ENCODE measurements at regions of chr1 and their contacts with region 1.

Region 1: DNA sequence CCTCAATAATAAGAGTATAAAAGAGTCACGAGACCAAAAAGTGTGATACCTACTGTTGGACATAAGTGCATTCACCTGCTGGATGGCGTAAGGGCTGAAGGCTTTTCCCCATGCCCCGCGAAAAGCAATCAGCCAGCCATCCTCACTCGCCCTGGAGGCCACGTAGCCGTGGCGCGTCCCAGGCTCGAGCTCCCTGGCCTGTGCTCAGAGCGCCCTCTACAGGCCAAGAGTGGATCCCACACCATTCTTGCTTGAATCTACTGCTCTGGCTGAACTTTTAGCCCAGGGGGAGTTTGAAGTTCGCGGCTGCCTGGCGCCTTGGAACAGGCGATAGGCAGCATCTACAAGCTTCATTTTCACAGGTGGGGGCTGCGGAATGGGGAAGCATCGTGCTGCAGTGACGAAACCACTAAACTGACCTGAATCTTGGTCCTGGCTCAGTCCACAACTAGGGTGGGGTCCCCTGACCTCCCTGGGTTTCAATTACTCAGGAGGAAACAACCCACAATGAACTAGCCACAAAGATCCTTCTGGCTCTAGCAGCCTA is 70.3 kb upstream of the SERBP1 start:
- DNase-seq: peak; percentile 90
- H3K4me3 Mint-ChIP-seq: no peak overlapping the region
- H3K27ac Mint-ChIP-seq: no peak overlapping the region
- H3K4me1 Mint-ChIP-seq: peaks cover 4% of the 10 kb centered on the region
- H3K27me3 Mint-ChIP-seq: peaks cover 6% of the 10 kb centered on the region

Region 2: GRCh38 chr1:67230539-67230938 is 269.9 kb before region 1 on chr1:
- CTCF ChIA-PET with region 1: interaction called, 31 read pairs
- POLR2A ChIA-PET with region 1: no interaction called
- DNase-seq: no peak
- H3K4me3 Mint-ChIP-seq: no peak overlapping the region
- H3K27ac Mint-ChIP-seq: no peak overlapping the region
- H3K4me1 Mint-ChIP-seq: peaks cover 9% of the 10 kb centered on the region
- H3K27me3 Mint-ChIP-seq: no peaks in the 10 kb centered on the region

Region 3: DNA sequence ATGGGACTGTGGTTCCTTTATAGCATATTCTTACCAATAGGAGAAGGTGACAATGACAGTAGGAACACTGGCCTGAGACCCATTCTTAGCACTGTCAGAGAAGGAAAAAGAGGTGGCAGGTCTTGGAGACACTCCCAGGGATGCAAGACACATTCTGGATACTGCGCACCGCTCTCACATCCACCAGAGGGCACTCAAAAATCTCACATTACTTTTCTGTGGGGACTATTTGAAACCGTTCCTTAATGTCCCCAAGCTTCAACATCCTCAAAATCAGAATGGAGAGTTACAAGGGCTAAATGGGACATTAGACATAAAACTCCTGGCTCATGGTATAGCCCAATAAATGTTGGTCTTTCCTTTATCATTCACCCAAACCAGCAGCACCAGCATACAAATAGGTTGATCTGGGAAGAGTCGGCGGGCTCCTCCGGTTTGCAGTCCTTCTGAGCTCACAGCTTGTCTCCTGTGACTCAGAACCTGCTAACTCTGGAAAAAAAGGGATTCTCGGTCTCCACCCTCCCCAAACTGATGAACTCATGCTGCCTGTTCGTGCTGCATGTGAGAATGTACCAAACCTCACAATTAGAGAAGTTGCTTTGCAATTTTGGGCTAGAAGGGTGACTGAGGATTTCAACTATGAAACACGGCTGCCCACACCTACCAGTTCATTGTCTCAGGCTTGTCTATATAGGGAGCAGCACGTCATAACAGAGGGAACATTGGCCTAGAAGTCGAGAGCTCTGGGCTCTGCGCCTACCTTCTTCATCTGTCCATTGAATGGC is 152.6 kb before region 1 on chr1:
- CTCF ChIA-PET with region 1: interaction called, 28 read pairs
- POLR2A ChIA-PET with region 1: no interaction called
- DNase-seq: no peak
- H3K4me3 Mint-ChIP-seq: no peak overlapping the region
- H3K27ac Mint-ChIP-seq: no peak overlapping the region
- H3K4me1 Mint-ChIP-seq: peaks cover 31% of the 10 kb centered on the region
- H3K27me3 Mint-ChIP-seq: no peaks in the 10 kb centered on the region

Region 4: DNA sequence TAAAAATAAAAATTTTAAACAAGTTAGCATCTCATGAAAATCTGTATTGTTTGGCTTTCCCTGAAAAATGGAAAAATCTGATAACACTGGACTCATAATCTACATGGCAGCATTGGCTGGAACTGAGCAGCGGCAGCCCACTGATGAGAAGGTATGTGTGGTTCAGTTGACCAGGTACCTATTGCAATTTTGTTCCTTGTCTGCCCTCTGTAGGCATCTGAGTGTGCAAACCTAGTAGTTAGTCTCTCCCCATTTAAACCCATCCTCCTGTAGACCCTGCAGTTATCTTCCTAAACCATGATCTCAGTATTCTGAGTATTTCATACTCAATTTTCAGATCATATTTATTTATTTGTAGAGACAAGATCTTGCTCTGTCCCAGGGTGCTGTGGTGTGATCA is 10.8 kb before region 1 on chr1:
- CTCF ChIA-PET with region 1: interaction called, 19 read pairs
- POLR2A ChIA-PET with region 1: no interaction called
- DNase-seq: no peak
- H3K4me3 Mint-ChIP-seq: no peak overlapping the region
- H3K27ac Mint-ChIP-seq: no peak overlapping the region
- H3K4me1 Mint-ChIP-seq: no peaks in the 10 kb centered on the region
- H3K27me3 Mint-ChIP-seq: no peaks in the 10 kb centered on the region